Heart right ventricle (tissue), 16 donors: ENCODE measurements at regions of chr10 and their contacts with region 1.

Region 1: DNA sequence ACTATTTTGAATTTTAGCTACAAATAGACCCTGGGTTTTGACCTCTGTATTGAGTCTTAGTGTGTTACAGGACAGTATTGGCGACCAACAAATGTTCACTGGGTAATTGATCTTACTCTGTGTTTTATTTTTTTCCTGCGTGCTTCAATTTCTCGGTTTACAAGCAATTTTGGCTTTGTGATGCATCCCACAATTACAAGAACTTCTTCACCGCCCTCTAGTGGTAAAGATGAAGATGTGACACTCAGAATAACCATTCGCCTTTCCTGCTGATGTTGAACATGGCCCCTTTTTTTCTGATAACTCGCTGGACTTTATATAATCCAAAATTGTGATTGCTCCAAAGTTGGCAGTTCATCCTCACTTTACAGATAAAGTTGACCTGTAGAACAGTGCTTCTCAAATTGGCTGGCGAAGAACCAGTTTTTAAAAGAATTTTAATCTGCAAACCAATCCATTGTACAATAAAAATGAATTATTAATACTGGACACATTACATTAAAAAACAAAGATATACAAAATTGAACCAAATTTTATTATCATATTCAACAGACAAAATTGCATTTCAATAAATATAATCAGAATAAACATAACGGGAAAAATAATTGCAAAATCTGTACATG is 20.2 kb upstream of the SMC3 start:
- DNase-seq: peak in 1 of 2 donors; percentile 12
- ATAC-seq: peak in 6 of 8 donors; percentile 66 to 80 (median 76)
- H3K4me3 ChIP-seq: no peak overlapping the region
- H3K27ac ChIP-seq: no peak overlapping the region
- H3K4me1 ChIP-seq: peaks cover 0 to 14% (median 0%) of the 10 kb centered on the region in 9 donors
- H3K27me3 ChIP-seq: peaks cover 0 to 15% (median 0%) of the 10 kb centered on the region in 7 donors
- CTCF ChIP-seq: peak; percentile 72 to 88 (median 81)

Region 2: DNA sequence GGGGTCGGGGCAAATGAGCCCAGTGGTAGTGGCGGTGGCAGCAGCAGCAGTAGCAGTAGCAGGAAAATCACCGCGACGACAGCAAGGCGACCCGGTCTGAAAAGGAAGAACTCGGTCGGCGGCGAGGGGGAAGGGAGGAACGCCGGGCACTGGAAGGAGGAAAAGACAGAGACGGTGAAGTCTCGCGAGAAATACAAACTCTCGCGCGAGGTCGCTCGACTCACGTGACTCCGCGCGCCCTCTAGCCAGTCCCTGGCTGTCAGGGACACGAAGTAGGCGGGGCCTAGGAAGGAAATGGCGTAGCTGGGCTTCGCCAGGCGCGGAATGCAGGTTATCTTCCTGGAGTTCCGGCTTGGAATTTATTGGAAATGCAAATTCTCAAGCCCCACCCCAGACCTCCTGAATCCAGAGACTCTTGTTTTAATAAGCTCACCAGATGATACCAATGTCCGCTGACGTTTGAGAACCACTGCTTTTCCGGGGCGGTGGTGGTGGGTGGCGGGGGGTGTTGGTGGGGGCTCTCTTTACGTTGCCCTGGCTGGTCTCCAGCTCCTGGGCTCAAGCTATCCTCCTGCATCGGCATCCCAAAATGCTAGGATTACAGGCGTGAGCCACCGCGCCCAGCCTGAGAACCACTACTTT is 242.3 kb before region 1 on chr10 and contains the start of gene SMNDC1:
- intact Hi-C with region 1: loop called in 7 of 10 experiments (anchors 1 to 5 kb)
- DNase-seq: peak; percentile 98
- ATAC-seq: peak; percentile 96 to 98 (median 98)
- H3K4me3 ChIP-seq: peak within 1 kb of the TSS; percentile 79 to 96 (median 86)
- H3K27ac ChIP-seq: peak within 1 kb of the TSS; percentile 83 to 95 (median 92)
- H3K4me1 ChIP-seq: peaks cover 4 to 68% (median 52%) of the 10 kb centered on the region in 9 donors
- H3K27me3 ChIP-seq: no peaks in the 10 kb centered on the region
- CTCF ChIP-seq: no peak
- total RNA-seq, gene SMNDC1: 18.1 to 28.0 (median 22.4) TPM

Region 3: DNA sequence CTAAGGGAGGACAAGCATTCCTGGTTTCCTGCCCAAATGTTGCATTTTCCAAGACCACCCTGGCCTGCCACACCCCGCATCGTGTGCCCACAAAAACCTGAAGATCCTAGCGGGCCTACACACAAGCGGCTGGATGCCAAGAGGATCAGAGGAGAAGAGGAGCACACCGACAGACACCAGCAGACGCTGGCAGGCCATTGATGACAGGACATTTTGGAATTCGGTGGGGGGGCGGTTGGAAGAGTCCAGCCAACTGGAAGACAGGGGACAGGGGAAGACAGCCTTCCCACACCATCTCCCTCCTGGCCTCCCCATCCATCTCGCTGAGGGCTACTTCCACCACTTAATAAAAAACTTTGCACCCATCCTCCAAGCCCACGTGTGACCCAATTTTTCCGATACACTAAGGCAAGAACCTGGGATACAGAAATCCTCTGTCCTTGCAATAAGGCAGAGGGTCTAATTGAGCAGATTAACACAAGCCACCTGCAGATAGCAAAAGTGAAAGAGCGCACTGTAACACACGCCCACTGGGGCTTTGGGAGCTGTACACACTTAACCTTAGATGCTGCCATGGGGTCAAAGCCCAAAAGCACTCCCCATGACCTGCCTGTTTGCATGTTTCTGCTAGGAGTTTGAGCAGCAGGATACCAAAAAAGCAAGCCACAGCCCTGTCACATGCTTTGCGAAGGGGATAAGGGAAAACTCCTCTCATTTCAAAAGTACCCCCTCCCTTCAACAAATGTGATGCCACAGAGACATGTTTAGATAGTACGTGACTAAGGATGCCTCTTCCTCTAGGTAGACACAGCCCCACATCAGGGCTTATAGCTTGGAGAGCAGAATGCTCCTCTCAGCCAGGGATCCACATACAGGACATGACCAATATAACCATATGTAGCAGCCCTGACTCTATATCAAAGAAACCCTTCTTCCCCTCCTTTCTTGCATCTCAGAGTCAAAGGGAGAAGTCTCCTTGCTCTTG is 229.1 kb before region 1 on chr10:
- intact Hi-C with region 1: loop called in 3 of 10 experiments (anchors 5 kb)
- DNase-seq: no peak
- ATAC-seq: no peak
- H3K4me3 ChIP-seq: no peak overlapping the region
- H3K27ac ChIP-seq: no peak overlapping the region
- H3K4me1 ChIP-seq: no peaks in the 10 kb centered on the region
- H3K27me3 ChIP-seq: no peaks in the 10 kb centered on the region
- CTCF ChIP-seq: no peak